ENCODE measurements at regions of chr12 and their contacts with region 1.

Region 1: DNA sequence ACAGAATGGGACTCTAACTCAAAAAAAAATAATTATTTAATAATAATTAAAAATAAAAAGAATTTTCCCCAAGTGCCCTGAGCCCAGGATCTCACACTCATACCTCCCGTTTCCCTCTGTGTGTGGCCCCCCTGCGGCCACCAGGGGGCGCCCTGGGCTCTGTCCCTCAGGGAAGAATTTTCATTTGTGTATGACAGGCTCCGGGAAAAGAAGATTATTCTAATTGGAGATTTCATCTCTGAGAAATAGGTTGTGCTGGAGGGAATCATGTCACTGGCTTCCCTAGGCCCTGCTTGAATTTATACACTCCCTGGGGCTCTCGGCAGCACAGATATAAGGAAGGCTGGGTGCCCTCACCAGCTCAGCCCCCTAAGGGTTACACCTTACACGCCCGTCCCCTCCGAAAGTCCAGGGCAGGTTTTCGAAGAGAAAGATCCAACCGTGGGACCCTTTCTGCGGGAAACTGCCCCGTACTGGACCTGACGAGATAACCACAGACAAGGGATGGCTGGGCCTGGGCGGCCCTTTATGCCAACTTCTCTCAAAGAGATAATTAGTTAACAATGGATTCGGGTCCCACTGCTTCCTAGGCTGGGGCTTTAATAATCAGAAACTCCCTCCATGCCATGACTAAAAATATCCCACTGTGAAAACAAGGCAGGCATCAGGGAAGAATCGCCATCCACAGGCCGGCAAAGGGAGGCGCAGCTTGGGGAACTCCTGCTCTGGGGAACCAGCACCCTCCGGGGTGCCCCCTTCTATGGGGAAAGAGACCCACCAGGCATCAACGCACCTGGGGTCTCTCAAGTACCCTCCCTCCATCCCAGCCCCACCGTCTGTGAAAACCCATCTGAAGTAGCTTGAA is 80.7 kb downstream of the KDM2B start:
- DNase-seq: peak; percentile 94

Region 2: DNA sequence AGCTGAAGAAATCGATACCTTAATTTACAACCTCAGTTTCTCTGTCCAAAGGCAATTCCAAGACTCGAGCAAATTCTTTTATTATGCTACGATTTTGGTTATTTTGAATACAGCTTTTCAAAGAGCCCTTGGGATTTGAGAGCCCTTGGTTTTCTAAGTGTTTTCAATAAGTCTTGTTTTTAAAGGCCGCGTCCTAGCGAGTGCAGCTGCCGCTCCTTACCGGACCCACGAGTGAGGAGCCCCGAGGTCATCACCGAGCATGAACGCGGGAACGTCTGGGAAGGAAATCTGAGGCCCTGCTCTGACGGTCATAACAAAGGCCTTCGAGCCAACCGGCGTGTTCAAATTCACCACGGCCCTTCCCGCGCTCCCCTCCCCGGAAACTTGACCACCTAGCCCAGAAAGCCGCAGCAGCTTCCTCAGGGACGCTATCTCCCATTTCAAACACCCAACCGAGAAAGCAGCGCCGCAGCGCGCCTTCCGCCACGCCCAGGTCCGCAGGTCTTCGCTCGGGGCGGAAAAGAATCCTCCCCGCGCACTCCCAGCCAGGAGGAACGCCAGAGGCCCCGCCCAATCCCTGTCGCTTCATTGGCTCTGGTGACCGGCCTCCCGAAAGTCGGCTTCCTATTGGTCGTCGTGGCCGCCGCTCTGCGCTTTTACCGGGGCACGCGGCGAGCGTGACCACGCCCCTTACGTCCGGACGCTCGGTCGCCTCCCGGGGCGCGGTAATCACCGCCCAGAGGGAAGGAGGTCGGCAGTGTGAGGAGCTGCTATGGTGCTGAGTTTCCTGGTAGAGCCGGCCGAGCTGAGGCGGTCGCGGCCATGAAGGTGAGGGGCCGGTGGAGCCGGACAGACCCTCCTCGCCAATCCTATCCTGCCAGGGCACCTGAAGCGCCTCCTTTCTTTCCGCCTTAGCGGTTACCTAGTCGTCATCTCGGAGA is 100.5 kb before region 1 on chr12 and contains the start of gene RNF34:
- intact Hi-C with region 1: no loop called
- DNase-seq: peak; percentile 100
- total RNA-seq, gene RNF34: 24.4 to 27.3 TPM

Region 3: GRCh38 chr12:121467115-121467793 is 32.9 kb before region 1 on chr12:
- intact Hi-C with region 1: loop called in 1 of 2 experiments (anchors 1 kb)
- DNase-seq: peak; percentile 95

Region 4: DNA sequence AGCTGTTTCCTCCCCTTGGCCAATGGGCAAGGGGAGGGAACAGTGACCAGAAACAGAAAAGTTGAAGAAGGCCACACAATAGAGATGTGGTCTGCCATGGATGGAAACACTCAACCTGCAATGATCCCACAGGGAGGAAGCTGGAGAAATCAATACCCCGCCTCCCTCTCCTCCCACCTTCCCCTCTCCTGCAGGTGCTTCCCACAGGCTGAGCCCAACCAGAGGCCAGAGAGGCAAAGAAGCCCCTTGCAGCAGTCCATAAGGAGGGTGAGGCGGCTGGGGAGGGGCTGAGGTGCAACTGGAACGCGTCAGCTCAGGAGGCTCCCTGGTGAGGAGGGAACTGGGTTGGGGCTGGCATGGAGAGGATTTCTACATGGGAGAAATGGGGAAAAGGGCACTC is 16.2 kb before region 1 on chr12:
- intact Hi-C with region 1: no loop called
- DNase-seq: no peak

Region 5: DNA sequence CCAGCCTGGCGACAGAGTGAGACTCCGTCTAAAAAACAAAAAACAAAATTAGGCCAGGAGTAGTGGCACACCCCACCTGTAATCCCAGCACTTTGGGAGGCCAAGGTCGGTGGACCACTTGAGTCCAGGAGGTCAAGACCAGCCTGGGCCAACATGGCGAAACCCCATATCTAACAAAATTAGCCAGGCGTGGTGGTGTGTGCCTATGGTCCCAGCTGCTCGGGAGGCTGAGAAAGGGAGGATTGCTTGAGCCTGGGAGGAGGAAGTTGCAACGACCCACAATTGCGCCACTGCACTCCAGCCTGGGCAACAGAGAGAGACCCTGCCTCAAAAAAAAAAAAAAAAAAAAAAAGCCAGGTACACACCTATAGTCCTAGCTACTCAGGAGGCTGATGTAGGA is 43.6 kb after region 1 on chr12:
- intact Hi-C with region 1: no loop called
- DNase-seq: no peak

Region 6: GRCh38 chr12:121668750-121669520 is 168.8 kb after region 1 on chr12:
- intact Hi-C with region 1: loop called (anchors 10 kb)
- DNase-seq: no peak

Region 7: GRCh38 chr12:123494124-123494851 is 1994.1 kb after region 1 on chr12:
- intact Hi-C with region 1: loop called in 1 of 2 experiments (anchors 5 kb)
- DNase-seq: no peak